PC-9 (cell line): ENCODE measurements at regions of chr5 and their contacts with region 1.

Region 1: GRCh38 chr5:26295541-26295940 is 742.8 kb downstream of the CDH9 start:
- DNase-seq: no peak
- H3K4me3 ChIP-seq: no peak overlapping the region
- H3K27ac ChIP-seq: no peak overlapping the region
- H3K4me1 ChIP-seq: no peaks in the 10 kb centered on the region
- H3K27me3 ChIP-seq: no peaks in the 10 kb centered on the region
- CTCF ChIP-seq: no peak

Region 2: DNA sequence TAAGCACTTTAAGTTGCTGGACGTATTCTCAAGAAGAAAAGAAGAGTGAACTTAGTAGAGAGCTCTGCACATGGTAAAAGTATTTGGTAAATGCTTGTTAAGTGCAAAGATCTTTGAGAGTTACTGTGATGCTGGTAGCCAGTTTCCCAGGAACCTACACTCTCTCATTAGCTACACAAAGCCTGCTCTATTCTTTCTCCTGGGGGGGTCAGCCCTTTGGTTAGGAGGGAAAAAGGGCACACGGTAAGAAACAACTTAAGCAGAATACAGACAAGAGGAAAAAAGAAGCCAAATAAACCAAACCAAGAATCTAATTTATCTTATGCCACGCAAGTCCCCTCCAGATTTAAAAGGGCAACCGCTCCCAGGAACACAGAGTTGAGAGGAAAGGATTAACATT is 550.6 kb before region 1 on chr5:
- CTCF ChIA-PET with region 1: no interaction called
- POLR2A ChIA-PET with region 1: no interaction called
- intact Hi-C with region 1: loop called (anchors 1 kb)
- DNase-seq: no peak
- H3K4me3 ChIP-seq: no peak overlapping the region
- H3K27ac ChIP-seq: no peak overlapping the region
- H3K4me1 ChIP-seq: no peaks in the 10 kb centered on the region
- H3K27me3 ChIP-seq: no peaks in the 10 kb centered on the region
- CTCF ChIP-seq: no peak

Region 3: GRCh38 chr5:26259081-26259480 is 36.5 kb before region 1 on chr5:
- CTCF ChIA-PET with region 1: no interaction called
- POLR2A ChIA-PET with region 1: no interaction called
- intact Hi-C with region 1: no loop called
- DNase-seq: no peak
- H3K4me3 ChIP-seq: no peak overlapping the region
- H3K27ac ChIP-seq: no peak overlapping the region
- H3K4me1 ChIP-seq: no peaks in the 10 kb centered on the region
- H3K27me3 ChIP-seq: no peaks in the 10 kb centered on the region
- CTCF ChIP-seq: no peak

Region 4: GRCh38 chr5:26649000-26649399 is 353.5 kb after region 1 on chr5:
- CTCF ChIA-PET with region 1: no interaction called
- POLR2A ChIA-PET with region 1: no interaction called
- intact Hi-C with region 1: no loop called
- DNase-seq: no peak
- H3K4me3 ChIP-seq: no peak overlapping the region
- H3K27ac ChIP-seq: no peak overlapping the region
- H3K4me1 ChIP-seq: no peaks in the 10 kb centered on the region
- H3K27me3 ChIP-seq: no peaks in the 10 kb centered on the region
- CTCF ChIP-seq: no peak